IMR-90 (cell line): ENCODE measurements at regions of chr11 and their contacts with region 1.

Region 1: GRCh38 chr11:34977089-34977906 is 60.9 kb downstream of the PDHX start:
- DNase-seq: peak; percentile 94
- ATAC-seq: peak; percentile 77
- H3K4me3 ChIP-seq: no peak overlapping the region
- H3K27ac ChIP-seq: peak overlapping the region; percentile 100; the same call in 1 of the 2 replicates
- H3K4me1 ChIP-seq: peaks cover 21% of the 10 kb centered on the region
- H3K27me3 ChIP-seq: no peaks in the 10 kb centered on the region
- CTCF ChIP-seq: no peak
- POLR2A ChIP-seq: no peak
- RAD21 ChIP-seq: no peak

Region 2: DNA sequence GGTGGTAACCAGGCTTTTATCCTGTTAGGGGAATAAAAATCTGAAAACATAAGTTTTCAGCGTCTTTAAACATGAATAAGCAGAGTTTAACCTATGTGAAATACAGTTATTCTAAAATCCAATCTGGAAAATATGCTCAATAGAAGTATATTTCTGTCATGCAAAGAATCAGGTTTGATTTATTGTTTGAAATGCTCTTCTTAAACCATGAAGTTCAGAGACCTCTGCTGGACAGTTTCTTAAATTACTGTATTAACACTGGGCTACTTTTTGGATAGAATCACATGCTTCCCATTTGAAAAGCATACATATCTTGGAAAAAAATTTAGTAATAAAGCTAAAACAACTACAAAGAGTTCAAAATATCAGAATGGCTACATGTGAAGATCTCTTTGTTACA is 86.5 kb before region 1 on chr11:
- CTCF ChIA-PET with region 1: no interaction called
- POLR2A ChIA-PET with region 1: no interaction called
- dilution Hi-C with region 1: no loop called
- in situ Hi-C with region 1: no loop called
- intact Hi-C with region 1: no loop called
- DNase-seq: peak; percentile 55
- ATAC-seq: peak; percentile 48
- H3K4me3 ChIP-seq: no peak overlapping the region
- H3K27ac ChIP-seq: no peak overlapping the region
- H3K4me1 ChIP-seq: no peaks in the 10 kb centered on the region
- H3K27me3 ChIP-seq: no peaks in the 10 kb centered on the region
- CTCF ChIP-seq: peak; percentile 63
- POLR2A ChIP-seq: no peak
- RAD21 ChIP-seq: peak; percentile 77

Region 3: GRCh38 chr11:34916843-34917770 is 60.2 kb before region 1 on chr11:
- CTCF ChIA-PET with region 1: no interaction called
- POLR2A ChIA-PET with region 1: interaction called, 3 read pairs
- dilution Hi-C with region 1: no loop called
- in situ Hi-C with region 1: no loop called
- intact Hi-C with region 1: loop called (anchors 1 kb)
- DNase-seq: peak; percentile 30
- ATAC-seq: peak; percentile 16
- H3K4me3 ChIP-seq: peak overlapping the region; percentile 94
- H3K27ac ChIP-seq: peak overlapping the region; percentile 89
- H3K4me1 ChIP-seq: peaks cover 7% of the 10 kb centered on the region; the same call in 1 of the 2 replicates
- H3K27me3 ChIP-seq: no peaks in the 10 kb centered on the region
- CTCF ChIP-seq: no peak
- POLR2A ChIP-seq: no peak
- RAD21 ChIP-seq: no peak

Region 4: GRCh38 chr11:35138943-35139721 is 161.8 kb after region 1 on chr11 and contains the start of gene CD44:
- CTCF ChIA-PET with region 1: no interaction called
- POLR2A ChIA-PET with region 1: interaction called, 44 read pairs
- dilution Hi-C with region 1: no loop called
- in situ Hi-C with region 1: no loop called
- intact Hi-C with region 1: loop called (anchors 1 kb)
- DNase-seq: peak; percentile 86
- ATAC-seq: peak; percentile 68
- H3K4me3 ChIP-seq: peak within 1 kb of the TSS; percentile 74
- H3K27ac ChIP-seq: peak within 1 kb of the TSS; percentile 97
- H3K4me1 ChIP-seq: peaks cover 21% of the 10 kb centered on the region
- H3K27me3 ChIP-seq: no peaks in the 10 kb centered on the region
- CTCF ChIP-seq: no peak
- POLR2A ChIP-seq: peak; percentile 98
- RAD21 ChIP-seq: no peak
- total RNA-seq, gene CD44: 341 and 357 TPM in 2 replicates

Region 5: DNA sequence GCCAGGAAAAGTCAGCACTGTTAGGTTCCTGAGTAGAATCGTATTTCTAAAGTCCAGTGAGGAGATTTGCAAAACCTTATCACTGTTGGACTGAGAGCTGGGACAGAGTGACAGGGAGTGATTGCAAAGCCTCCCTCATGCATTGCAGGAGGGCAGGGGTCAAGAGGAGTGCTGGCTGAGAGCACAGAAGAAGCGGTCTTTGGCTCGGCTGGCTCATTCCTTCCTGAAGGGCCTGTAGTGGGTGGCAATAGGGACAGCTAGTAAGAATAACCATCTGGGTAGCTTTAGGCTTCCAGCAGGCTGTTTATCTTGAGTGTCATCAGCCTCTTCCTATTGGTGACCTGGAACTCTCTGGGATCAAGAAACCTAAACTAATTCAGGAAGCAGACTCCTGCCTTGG is 215.0 kb after region 1 on chr11:
- CTCF ChIA-PET with region 1: interaction called, 3 read pairs
- POLR2A ChIA-PET with region 1: no interaction called
- dilution Hi-C with region 1: no loop called
- in situ Hi-C with region 1: no loop called
- intact Hi-C with region 1: loop called (anchors 5 kb)
- DNase-seq: peak; percentile 38
- ATAC-seq: peak; percentile 45
- H3K4me3 ChIP-seq: no peak overlapping the region
- H3K27ac ChIP-seq: peak overlapping the region; percentile 64
- H3K4me1 ChIP-seq: peaks cover 28% of the 10 kb centered on the region
- H3K27me3 ChIP-seq: no peaks in the 10 kb centered on the region
- CTCF ChIP-seq: no peak
- POLR2A ChIP-seq: no peak
- RAD21 ChIP-seq: no peak